ENCODE measurements at regions of chr10 and their contacts with region 1.

Region 1: DNA sequence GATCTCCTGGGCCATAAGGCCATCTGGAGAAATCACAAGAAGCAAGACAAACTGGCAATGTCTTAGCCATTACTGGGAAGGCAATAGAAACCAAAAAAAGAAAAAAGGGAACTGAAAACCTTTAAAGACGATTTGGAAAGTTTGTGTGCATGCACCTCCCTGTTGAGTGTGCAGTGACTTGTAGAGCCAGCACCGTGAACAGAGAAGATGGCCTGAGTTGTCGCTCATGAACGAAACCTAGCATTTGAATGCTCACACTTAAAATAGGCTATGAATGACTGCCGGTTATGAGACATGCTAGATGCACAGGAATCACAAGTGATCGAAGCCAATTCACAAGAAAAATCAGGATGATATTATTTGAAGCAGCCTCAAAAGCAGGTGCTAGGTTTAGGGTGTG is 151.3 kb upstream of the ADO start:
- DNase-seq: peak; percentile 97
- ATAC-seq: peak; percentile 85
- H3K4me3 ChIP-seq: no peak overlapping the region
- H3K27ac ChIP-seq: peak overlapping the region; percentile 90
- H3K4me1 ChIP-seq: peaks cover 50% of the 10 kb centered on the region
- H3K27me3 ChIP-seq: no peaks in the 10 kb centered on the region
- CTCF ChIP-seq: no peak
- EP300 ChIP-seq: peak; percentile 99
- POLR2A ChIP-seq: no peak
- RAD21 ChIP-seq: peak; percentile 45; the same call in 1 of the 2 replicates

Region 2: DNA sequence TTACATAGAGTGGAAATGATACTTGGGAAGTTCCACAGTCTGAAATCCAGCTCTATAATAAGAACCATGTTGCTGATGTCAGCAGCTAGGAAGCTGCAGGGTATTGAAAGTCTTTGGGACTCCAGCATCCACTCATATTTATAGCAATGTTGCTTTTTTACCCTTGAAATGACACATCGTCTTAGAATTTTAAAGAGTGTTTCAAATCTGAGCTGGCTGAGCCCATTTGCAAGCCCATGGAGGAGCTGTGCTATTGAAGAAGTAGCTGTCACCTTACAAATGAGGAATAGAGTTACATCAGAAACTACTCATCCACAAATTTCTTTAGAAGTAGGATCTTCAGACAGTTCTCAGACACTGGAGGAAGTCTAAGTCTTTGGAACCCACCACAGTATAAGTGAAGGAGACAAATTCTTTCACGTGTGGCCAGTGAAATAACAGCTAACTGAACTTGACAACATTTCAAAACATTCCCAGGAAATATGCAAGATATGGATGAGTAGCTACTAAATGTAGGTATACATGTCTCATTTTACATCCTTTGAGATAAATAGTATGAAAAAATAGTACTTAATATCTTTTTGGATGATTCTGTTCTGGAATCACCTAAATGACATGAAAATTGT is 75.5 kb before region 1 on chr10:
- CTCF ChIA-PET with region 1: no interaction called
- POLR2A ChIA-PET with region 1: no interaction called
- RAD21 ChIA-PET with region 1: no interaction called
- SMC1A ChIA-PET with region 1: no interaction called
- in situ Hi-C with region 1: no loop called
- intact Hi-C with region 1: no loop called
- DNase-seq: no peak
- ATAC-seq: no peak
- H3K4me3 ChIP-seq: no peak overlapping the region
- H3K27ac ChIP-seq: no peak overlapping the region
- H3K4me1 ChIP-seq: no peaks in the 10 kb centered on the region
- H3K27me3 ChIP-seq: peaks cover 0 to 2% of the 10 kb centered on the region in 2 experiments; a peak in 2 of 4 replicates
- CTCF ChIP-seq: no peak
- EP300 ChIP-seq: no peak
- POLR2A ChIP-seq: no peak
- RAD21 ChIP-seq: no peak

Region 3: DNA sequence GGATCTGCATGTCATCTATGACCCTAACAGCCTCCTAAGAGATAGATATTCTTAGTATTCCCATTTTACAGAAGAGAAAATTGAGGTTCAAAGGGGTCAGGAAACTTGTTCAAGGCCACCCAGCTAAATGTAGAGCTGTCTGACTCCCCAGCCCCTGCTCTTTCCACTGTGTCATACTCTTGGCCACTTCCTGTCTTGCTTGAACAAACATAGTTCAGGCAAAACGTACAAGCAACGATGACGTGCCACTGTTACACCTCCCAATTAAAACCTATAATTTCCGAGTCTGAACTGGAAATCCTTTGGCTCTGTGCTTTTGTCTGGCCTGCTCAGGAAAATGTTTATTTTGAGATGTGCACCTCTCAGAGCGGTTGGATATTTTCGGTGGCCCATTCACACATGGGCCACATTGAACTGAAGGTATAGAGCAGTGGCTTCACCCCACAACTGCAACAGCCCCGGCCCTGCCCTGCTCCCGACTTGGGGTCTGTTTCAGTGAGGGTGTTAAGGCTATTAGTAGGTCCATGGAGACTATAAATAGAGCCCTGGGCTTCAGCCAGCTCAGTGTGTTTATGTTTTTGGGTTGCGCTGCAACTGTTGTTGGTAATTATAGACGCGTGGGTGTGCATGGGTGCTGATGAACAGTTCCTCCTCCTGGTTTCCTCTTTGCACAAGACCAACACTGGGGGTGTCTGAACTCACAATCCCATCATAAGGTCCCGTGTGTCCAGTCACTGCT is 21.0 kb before region 1 on chr10:
- CTCF ChIA-PET with region 1: interaction called, 64 read pairs
- POLR2A ChIA-PET with region 1: interaction called, 59 read pairs
- RAD21 ChIA-PET with region 1: interaction called, 97 read pairs
- SMC1A ChIA-PET with region 1: interaction called, 329 read pairs
- in situ Hi-C with region 1: no loop called
- intact Hi-C with region 1: loop called (anchors 1 kb)
- DNase-seq: peak; percentile 80
- ATAC-seq: peak; percentile 85
- H3K4me3 ChIP-seq: 0 out of 2 replicates have a peak overlapping the region, but pooled peaks have one; percentile 1
- H3K27ac ChIP-seq: peak overlapping the region; percentile 71
- H3K4me1 ChIP-seq: peaks cover 56% of the 10 kb centered on the region
- H3K27me3 ChIP-seq: no peaks in the 10 kb centered on the region
- CTCF ChIP-seq: no peak
- EP300 ChIP-seq: peak; percentile 75 to 94
- POLR2A ChIP-seq: no peak
- RAD21 ChIP-seq: peak; percentile 29; the same call in 1 of the 2 replicates

Region 4: DNA sequence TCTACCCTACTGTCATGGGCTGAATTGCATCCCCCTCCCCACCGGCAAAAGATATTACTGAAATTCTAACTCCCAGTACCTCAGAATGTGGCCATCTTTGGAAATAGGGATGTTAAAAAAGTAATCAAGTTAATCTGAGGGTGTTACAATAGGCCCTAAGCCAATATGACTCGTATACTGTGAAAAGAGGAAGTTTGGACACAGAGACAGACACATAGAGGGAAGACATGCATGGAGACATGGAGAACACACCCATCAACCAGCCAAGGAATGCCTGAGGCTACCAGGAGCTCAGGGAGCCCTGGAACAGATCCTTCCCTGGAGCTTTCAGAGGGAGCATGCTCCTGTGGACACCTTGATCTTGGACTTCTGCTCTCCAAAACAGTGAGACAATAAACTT is 13.0 kb after region 1 on chr10:
- CTCF ChIA-PET with region 1: interaction called, 6 read pairs
- POLR2A ChIA-PET with region 1: interaction called, 8 read pairs
- RAD21 ChIA-PET with region 1: interaction called, 38 read pairs
- SMC1A ChIA-PET with region 1: interaction called, 53 read pairs
- in situ Hi-C with region 1: no loop called
- intact Hi-C with region 1: no loop called
- DNase-seq: no peak
- ATAC-seq: peak; percentile 19; the same call in 1 of the 3 replicates
- H3K4me3 ChIP-seq: no peak overlapping the region
- H3K27ac ChIP-seq: no peak overlapping the region
- H3K4me1 ChIP-seq: peaks cover 4% of the 10 kb centered on the region; the same call in 1 of the 2 replicates
- H3K27me3 ChIP-seq: no peaks in the 10 kb centered on the region
- CTCF ChIP-seq: no peak
- EP300 ChIP-seq: no peak
- POLR2A ChIP-seq: no peak
- RAD21 ChIP-seq: no peak

Region 5: DNA sequence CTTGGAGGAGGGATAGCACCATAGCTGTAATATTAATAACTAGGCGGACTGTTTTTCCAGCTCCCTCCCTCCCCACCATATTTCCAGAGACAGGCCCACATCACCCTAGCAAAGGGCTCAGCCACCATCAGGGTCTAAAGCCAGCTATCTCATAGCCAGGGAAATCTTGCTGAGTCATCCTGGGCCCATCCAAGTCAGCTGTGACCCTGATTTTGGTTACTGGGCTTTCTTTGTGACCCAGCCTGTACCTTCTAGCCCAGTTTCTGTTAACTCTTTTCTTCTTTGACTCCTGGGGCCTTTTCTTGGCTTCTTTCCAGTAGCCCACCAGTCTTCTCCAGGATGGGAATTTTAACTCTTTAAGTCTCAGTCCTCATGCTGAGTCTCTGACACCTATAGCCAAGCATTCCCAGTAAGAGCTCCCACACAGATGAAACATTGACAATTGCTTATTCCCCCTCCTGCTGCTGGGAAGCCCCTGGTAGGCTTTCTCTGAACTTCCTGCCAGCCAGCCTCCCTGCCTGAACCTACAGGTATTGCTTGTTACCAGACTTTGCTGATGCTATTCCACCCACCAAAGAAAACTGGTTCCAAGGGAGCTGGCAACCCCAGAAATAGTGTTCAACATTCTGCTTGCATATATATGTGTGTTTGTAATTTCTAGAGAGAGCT is 116.5 kb after region 1 on chr10:
- CTCF ChIA-PET with region 1: interaction called, 3 read pairs
- POLR2A ChIA-PET with region 1: interaction called, 4 read pairs
- RAD21 ChIA-PET with region 1: interaction called, 6 read pairs
- SMC1A ChIA-PET with region 1: interaction called, 11 read pairs
- in situ Hi-C with region 1: no loop called
- intact Hi-C with region 1: no loop called
- DNase-seq: no peak
- ATAC-seq: peak; percentile 87
- H3K4me3 ChIP-seq: no peak overlapping the region
- H3K27ac ChIP-seq: peak overlapping the region; percentile 56
- H3K4me1 ChIP-seq: peaks cover 31% of the 10 kb centered on the region
- H3K27me3 ChIP-seq: no peaks in the 10 kb centered on the region
- CTCF ChIP-seq: no peak
- EP300 ChIP-seq: no peak
- POLR2A ChIP-seq: no peak
- RAD21 ChIP-seq: no peak

Region 6: DNA sequence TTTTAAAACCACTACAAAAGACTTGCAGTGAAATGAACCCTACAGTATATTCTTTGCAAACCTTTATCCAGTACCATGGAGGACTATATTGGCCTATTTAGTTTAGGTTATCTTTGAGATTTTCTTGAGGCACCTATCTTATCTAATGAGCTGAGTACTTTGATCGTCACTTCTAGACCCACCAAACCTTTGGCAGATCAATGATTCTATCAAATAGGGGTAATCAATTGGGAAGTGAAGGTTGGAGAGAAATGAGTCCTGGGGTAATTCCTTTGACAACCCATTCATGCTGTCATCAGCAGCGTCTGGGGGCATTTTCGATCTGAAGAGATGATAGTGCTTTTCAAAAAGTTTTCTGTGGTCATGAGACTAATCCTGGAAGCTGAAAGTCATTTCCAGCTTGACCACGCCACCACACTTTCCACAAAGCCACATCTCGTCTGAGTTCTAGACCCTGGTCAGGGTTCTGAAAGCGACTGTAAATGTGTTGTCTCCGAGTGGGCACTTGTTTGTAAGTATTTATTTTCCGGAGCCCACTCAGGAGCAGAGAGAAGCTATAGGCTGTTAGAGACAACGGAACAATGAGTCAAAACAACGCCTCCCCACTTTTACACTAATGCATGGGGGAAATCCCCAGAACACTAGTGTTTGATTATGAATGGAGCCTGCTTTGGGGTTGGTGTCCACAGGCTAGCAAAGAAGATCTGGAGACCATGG is 158.1 kb after region 1 on chr10:
- CTCF ChIA-PET with region 1: interaction called, 7 read pairs
- POLR2A ChIA-PET with region 1: interaction called, 15 read pairs
- RAD21 ChIA-PET with region 1: interaction called, 47 read pairs
- SMC1A ChIA-PET with region 1: interaction called, 37 read pairs
- in situ Hi-C with region 1: no loop called
- intact Hi-C with region 1: loop called (anchors 1 kb)
- DNase-seq: peak; percentile 85
- ATAC-seq: peak; percentile 62
- H3K4me3 ChIP-seq: peak overlapping the region; percentile 25; the same call in 1 of the 2 replicates
- H3K27ac ChIP-seq: peak overlapping the region; percentile 42; the same call in 1 of the 2 replicates
- H3K4me1 ChIP-seq: peaks cover 20% of the 10 kb centered on the region
- H3K27me3 ChIP-seq: no peaks in the 10 kb centered on the region
- CTCF ChIP-seq: no peak
- EP300 ChIP-seq: peak; percentile 80 to 86; a peak in 3 of 4 replicates
- POLR2A ChIP-seq: 0 out of 2 replicates have a peak, but pooled peaks have one; percentile 21
- RAD21 ChIP-seq: 0 out of 2 replicates have a peak, but pooled peaks have one; percentile 6

Measured in GM12878 (cell line).